ENCODE measurements at regions of chr3 and their contacts with region 1.

Region 1: DNA sequence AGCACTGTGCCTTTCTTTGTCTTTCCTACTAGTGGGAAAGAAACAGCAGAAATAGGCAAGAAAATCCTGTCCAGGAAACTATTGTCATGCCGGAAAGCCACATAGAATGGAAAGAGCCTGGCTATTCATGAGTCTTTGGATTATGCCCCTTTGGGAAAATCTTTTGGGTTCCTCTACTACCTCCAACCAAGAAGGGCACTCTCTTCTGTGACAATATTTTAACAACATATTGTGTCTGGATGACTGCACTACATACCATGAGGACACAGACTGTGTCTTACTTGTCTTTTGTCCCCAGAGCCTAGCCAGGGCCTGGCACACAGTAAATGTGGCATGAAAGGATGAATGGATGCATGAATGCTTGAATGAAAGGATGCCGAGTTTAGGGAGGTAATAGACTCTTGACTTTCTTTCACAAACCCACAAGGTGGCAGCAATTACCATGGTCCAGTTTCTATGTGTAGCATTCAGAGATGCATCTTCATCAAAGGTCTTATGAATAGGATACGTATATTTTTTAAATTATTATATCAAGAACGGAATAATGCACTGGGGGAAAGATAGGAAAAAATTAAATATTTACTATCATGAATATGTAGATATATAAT is 30.3 kb downstream of the ARL14 start:
- DNase-seq: peak; percentile 27
- CTCF ChIP-seq: peak; percentile 31

Region 2: GRCh38 chr3:160343132-160343531 is 364.2 kb before region 1 on chr3:
- in situ Hi-C with region 1: no loop called
- DNase-seq: peak; percentile 23
- CTCF ChIP-seq: peak; percentile 15

Region 3: GRCh38 chr3:160921020-160921635 is 213.8 kb after region 1 on chr3:
- in situ Hi-C with region 1: loop called (anchors 10 kb)
- DNase-seq: peak; percentile 35
- CTCF ChIP-seq: peak; percentile 32

Region 4: GRCh38 chr3:160948272-160948671 is 241.0 kb after region 1 on chr3:
- in situ Hi-C with region 1: no loop called
- DNase-seq: no peak
- CTCF ChIP-seq: no peak

Region 5: DNA sequence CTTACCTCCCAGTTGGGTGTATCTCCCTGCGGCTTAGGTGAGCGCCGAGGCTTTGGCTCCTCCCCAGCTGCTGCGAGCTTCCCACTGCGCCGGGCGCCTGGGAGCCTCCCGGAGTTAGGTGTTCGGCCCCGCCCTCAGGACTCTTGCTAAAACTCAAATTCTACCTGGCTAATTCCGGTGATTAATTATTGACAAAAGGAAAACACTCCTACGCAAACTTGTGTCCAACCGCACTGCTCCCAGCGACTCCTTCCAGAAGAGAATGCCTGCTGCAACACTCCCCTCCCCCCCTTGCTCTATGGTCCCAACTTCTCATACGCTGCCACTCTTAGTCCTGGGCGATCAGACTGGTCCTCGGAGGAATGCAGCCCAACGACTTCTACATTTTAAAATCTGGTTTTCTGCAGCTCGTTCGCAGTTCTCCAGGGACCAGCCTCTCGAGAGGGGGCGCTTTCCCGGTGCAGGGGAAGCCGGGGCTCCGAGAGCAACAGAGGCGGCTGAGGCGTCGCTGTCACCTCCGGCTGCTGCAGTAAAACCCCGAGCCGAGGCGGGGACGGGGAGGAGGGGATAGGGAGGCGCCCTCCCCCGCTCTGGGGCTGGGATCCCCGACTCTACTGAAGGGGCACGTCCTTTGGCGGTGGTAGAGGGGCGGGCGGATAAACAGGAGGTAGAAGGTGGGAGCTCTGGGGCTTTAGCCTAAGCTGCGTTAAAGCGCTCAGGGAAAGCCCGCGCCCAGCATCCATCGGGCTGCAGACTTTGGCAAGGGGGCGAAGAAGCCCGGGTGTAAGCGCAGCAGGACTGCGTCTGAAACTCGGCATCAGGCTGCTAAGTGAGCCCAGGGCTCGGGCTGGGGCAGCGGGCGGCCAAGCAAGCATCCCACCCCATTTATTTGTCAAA is 664.4 kb after region 1 on chr3 and contains the start of gene SPTSSB:
- in situ Hi-C with region 1: no loop called
- DNase-seq: peak; percentile 48
- CTCF ChIP-seq: no peak